HEK293T (cell line): ENCODE measurements at regions of chr11 and their contacts with region 1.

Region 1: DNA sequence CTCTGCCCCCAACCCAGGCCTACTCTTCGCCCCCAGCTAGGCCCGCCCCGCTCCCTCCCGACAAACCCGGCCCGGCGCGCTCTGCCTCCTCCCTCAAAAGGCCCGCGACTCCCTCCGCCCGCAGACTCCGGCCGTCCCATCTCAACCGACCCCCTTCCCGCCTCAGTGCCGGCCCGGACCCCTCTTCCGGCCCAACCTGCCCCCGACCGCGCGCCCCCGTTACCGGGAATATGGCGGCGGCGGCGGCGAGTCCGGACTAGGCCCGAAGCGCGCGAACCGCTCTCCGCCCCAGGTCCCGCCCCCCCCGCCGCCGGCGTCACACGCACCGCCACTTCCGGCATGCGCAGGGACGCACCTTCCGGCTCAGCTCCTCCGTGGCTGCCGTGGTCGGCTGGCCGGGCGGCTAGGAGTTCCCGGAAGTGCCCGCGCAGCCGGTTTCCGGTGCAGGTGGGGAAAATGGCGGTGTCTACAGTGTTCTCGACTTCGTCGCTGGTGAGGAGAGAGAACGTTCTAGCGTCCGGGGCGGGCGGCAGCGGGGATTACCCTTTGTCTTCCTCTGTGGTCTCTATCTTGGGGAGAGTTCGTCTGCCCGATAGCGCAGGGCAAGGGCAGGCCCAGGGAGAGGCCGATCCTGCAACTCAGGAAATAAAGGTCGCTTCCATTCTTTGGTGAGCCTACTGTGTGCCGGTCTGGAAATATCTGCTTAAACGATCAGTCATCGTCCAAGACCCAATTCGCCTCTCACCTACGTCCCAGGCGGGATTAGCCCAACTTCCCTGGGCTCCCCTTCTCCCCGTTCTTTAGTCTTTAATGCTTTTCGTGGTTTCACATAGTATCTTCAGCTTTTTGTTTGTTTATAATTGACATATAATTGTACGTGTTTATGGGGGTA is at the starts of genes CPSF7 and SDHAF2:
- DNase-seq: peak; percentile 95

Region 2: GRCh38 chr11:61315260-61315659 is 114.7 kb before region 1 on chr11:
- CTCF ChIA-PET with region 1: no interaction called
- POLR2A ChIA-PET with region 1: no interaction called
- DNase-seq: no peak

Region 3: GRCh38 chr11:61392981-61393595 is 36.8 kb before region 1 on chr11:
- CTCF ChIA-PET with region 1: no interaction called
- POLR2A ChIA-PET with region 1: interaction called, 20 read pairs
- DNase-seq: peak; percentile 42

Region 4: DNA sequence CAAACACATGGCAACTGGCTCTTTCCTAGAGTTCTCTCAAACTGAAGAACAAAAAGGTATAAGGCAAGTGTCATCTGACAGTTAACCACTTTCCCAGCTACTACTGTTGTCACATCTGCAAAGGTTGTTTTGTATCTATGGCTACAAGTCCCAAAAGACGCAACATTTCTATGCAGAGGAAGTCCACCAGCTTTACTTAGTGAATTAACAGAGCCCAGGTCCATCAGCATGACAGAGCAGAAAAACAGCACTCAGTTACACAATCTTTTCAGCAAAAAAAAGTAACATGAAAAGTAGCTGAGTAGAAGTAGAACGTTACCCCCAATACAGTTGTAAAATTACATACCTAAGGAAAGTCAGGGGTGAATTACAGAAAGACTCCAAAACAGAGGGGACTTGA is 12.3 kb before region 1 on chr11:
- CTCF ChIA-PET with region 1: no interaction called
- POLR2A ChIA-PET with region 1: interaction called, 17 read pairs
- DNase-seq: no peak

Region 5: GRCh38 chr11:61446211-61446651 is 16.3 kb after region 1 on chr11:
- CTCF ChIA-PET with region 1: interaction called, 32 read pairs
- POLR2A ChIA-PET with region 1: interaction called, 10 read pairs
- DNase-seq: peak; percentile 85

Region 6: DNA sequence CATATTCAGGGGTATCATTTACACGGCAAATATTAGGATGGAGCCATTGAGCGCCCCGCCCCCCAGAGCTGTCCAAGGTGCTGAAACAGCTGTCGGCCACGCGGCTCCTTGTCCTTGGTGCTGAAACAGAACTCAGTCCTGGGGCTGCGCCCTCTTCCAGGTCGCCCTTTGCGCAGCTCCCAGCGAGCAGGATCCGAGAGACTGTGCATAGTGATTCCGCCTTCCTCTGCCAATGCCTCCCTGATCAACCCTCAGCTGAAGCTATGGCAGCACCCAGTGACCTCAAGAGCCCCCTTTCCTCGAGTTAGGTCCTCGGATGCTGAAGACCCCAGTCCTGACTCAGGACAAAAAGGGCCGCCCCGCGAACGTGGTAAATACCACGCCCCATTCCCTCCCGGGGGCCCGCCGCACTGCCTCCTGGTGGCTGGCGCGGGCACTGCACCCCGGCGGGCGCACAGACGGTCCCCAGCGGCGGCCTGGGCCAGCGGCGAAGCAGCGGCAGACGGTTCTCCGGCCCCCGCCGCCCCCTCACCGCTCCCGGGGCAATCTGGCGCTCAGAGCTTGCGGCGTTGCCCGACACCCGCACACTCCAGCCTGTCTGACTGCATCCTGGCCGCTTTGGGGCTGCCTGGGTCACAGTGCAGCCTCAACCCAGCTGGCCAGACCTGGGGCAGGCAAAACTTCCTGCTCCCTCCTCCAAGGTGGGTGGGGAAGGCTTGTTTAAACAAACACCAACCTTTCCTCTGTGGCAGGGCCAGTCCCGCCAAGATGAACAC is 137.5 kb after region 1 on chr11:
- CTCF ChIA-PET with region 1: no interaction called
- POLR2A ChIA-PET with region 1: no interaction called
- DNase-seq: peak; percentile 94